ENCODE measurements at regions of chr5 and their contacts with region 1.

Region 1: GRCh38 chr5:149731639-149732323 is 1.7 kb downstream of the PPARGC1B start:
- DNase-seq: peak; percentile 45
- ATAC-seq: peak; percentile 41
- H3K4me3 Mint-ChIP-seq: peak overlapping the region; percentile 77
- H3K27ac Mint-ChIP-seq: no peak overlapping the region
- H3K4me1 Mint-ChIP-seq: peaks cover 29% of the 10 kb centered on the region
- H3K27me3 Mint-ChIP-seq: peaks cover 22% of the 10 kb centered on the region
- CTCF ChIP-seq: no peak

Region 2: GRCh38 chr5:149765932-149766331 is 34.2 kb after region 1 on chr5:
- CTCF ChIA-PET with region 1: interaction called, 11 read pairs
- POLR2A ChIA-PET with region 1: interaction called, 3 read pairs
- DNase-seq: no peak
- ATAC-seq: no peak
- H3K4me3 Mint-ChIP-seq: no peak overlapping the region
- H3K27ac Mint-ChIP-seq: no peak overlapping the region
- H3K4me1 Mint-ChIP-seq: peaks cover 15% of the 10 kb centered on the region
- H3K27me3 Mint-ChIP-seq: no peaks in the 10 kb centered on the region
- CTCF ChIP-seq: peak; percentile 42

Region 3: DNA sequence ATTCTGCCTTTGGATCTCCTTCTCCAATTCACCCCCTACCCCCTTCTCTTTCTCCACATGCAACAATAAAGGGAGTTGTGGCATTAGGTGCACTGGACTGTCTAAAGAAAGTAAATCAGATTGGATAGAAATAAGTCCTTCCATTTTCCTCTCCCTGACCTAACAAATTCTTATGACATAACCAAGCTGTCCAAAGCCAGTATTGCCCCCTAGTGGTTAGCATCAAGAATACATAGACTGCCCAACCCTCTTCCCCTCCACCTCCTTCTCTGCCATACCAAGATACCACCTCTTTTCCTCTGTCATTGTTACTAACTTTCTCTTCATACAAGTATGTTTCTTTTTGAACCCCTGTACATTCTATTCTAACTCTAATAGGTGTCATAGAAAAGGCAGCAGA is 44.0 kb after region 1 on chr5:
- CTCF ChIA-PET with region 1: interaction called, 13 read pairs
- POLR2A ChIA-PET with region 1: no interaction called
- DNase-seq: no peak
- ATAC-seq: peak; percentile 18; the same call in 1 of the 2 replicates
- H3K4me3 Mint-ChIP-seq: no peak overlapping the region
- H3K27ac Mint-ChIP-seq: no peak overlapping the region
- H3K4me1 Mint-ChIP-seq: peaks cover 70% of the 10 kb centered on the region
- H3K27me3 Mint-ChIP-seq: no peaks in the 10 kb centered on the region
- CTCF ChIP-seq: peak; percentile 58